ENCODE measurements at regions of chr15 and their contacts with region 1.

Region 1: DNA sequence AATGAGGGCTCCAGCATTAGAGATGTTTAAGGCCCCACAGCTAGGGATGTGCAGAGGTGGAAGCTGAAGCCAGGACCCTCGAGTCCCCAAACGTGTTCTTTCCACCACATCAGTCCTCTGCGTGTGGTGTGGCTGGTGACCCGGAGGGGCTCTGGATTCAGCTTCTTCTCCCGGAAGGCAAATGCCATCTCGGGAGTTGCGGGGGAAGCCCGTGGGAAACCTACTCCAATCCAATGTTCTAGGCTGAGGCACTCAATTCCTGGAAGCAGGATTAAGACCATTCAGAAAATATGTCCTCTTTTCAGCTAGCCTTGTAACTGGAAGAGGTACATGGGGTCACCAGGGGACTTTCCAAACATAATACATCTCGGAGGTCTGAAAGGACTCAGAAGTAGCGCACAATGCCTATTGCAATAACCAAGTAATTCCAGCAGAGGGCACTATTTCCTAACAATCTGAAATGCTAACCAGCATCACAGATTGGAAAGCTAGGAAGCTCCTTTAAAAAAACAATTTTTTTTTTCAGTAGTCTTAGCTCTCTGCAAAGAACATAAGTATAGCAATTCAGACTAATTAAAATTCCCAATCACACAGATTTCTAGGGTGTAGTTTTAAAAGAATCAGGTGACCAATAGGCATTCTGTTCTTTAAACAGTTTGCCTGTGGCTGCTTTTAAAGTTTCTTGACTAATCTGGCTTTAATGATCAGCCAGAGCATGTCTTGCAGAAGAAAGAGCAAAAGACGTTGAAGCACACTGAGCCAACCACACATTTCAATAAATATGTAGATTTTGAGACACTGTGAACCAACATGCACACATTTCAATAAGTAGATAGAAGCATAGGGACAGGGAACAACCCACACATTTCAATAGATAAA is 36.1 kb downstream of the BNC1 start:
- DNase-seq: no peak
- ATAC-seq: no peak
- H3K4me3 Mint-ChIP-seq: no peak overlapping the region
- H3K27ac Mint-ChIP-seq: no peak overlapping the region
- H3K4me1 Mint-ChIP-seq: no peaks in the 10 kb centered on the region
- H3K27me3 Mint-ChIP-seq: peaks cover 60% of the 10 kb centered on the region

Region 2: GRCh38 chr15:83380682-83381081 is 132.3 kb after region 1 on chr15:
- CTCF ChIA-PET with region 1: interaction called, 13 read pairs
- DNase-seq: peak; percentile 71
- ATAC-seq: peak; percentile 72
- H3K4me3 Mint-ChIP-seq: no peak overlapping the region
- H3K27ac Mint-ChIP-seq: no peak overlapping the region
- H3K4me1 Mint-ChIP-seq: peaks cover 6% of the 10 kb centered on the region
- H3K27me3 Mint-ChIP-seq: peaks cover 34% of the 10 kb centered on the region

Region 3: GRCh38 chr15:83559310-83559966 is 311.0 kb after region 1 on chr15:
- CTCF ChIA-PET with region 1: interaction called, 10 read pairs
- DNase-seq: peak; percentile 61
- ATAC-seq: peak; percentile 73
- H3K4me3 Mint-ChIP-seq: no peak overlapping the region
- H3K27ac Mint-ChIP-seq: no peak overlapping the region
- H3K4me1 Mint-ChIP-seq: no peaks in the 10 kb centered on the region
- H3K27me3 Mint-ChIP-seq: no peaks in the 10 kb centered on the region

Measured in activated CD8-positive, alpha-beta memory T cell treated with anti-CD3 and anti-CD28 coated beads, Interleukin-2, amount 10 ng/mL, durations not matched to agents 7 days and 5 days (primary cell).